Naive thymus-derived CD4-positive, alpha-beta T cell (primary cell): ENCODE measurements at regions of chr2 and their contacts with region 1.

Region 1: GRCh38 chr2:101741775-101742520 is 44.4 kb downstream of the MAP4K4 start:
- DNase-seq: no peak
- ATAC-seq: no peak
- H3K4me3 ChIP-seq: no peak overlapping the region
- H3K4me3 Mint-ChIP-seq: peak overlapping the region in 9 of 10 donors; percentile 4 to 67 (median 57)
- H3K27ac ChIP-seq: peak overlapping the region; percentile 19
- H3K27ac Mint-ChIP-seq: peak overlapping the region; percentile 23 to 96 (median 83)
- H3K4me1 ChIP-seq: peaks cover 26 to 51% of the 10 kb centered on the region in 2 donors
- H3K4me1 Mint-ChIP-seq: peaks cover 60 to 98% (median 95%) of the 10 kb centered on the region in 7 donors
- H3K27me3 ChIP-seq: no peaks in the 10 kb centered on the region
- H3K27me3 Mint-ChIP-seq: no peaks in the 10 kb centered on the region

Region 2: GRCh38 chr2:101776172-101777043 is 34.5 kb after region 1 on chr2:
- CTCF ChIA-PET with region 1: interaction called, 3 read pairs
- POLR2A ChIA-PET with region 1: interaction called, 3 read pairs
- intact Hi-C with region 1: loop called in 1 of 2 experiments (anchors 5 kb)
- DNase-seq: no peak
- ATAC-seq: no peak
- H3K4me3 ChIP-seq: no peak overlapping the region
- H3K4me3 Mint-ChIP-seq: peak overlapping the region in 1 of 10 donors; percentile 63
- H3K27ac ChIP-seq: no peak overlapping the region
- H3K27ac Mint-ChIP-seq: peak overlapping the region in 2 of 9 donors; percentile 66 to 87
- H3K4me1 ChIP-seq: peaks cover 13 to 88% of the 10 kb centered on the region in 2 donors
- H3K4me1 Mint-ChIP-seq: peaks cover 72 to 100% (median 96%) of the 10 kb centered on the region in 7 donors
- H3K27me3 ChIP-seq: no peaks in the 10 kb centered on the region
- H3K27me3 Mint-ChIP-seq: no peaks in the 10 kb centered on the region